ENCODE measurements at regions of chr11 and their contacts with region 1.

Region 1: DNA sequence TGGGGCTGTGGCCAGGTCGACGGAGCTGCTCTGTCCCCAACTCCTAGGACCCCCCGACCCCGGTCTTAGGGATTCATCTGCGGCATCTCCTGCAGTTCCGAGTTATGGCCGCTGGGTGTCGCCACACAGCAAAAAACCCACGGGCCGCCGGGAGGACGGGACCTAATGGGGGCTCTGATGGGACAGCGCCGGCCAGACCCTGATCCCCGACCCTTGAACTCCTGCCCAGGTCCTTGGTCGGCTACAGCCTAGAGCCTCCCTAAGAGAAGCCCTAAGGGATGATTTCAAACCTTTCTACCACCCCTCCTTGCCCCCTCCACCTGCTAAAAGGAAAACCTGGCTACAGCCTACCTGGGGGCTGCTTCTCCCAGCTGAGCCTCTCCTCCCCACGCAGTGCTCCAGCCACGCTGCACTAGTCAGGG is 30.8 kb upstream of the LRRC10B start:
- DNase-seq: peak; percentile 52 to 72
- H3K4me3 ChIP-seq: no peak overlapping the region
- H3K4me3 Mint-ChIP-seq: no peak overlapping the region
- H3K27ac Mint-ChIP-seq: no peak overlapping the region
- H3K4me1 ChIP-seq: peaks cover 12% of the 10 kb centered on the region
- H3K4me1 Mint-ChIP-seq: no peaks in the 10 kb centered on the region
- H3K27me3 ChIP-seq: no peaks in the 10 kb centered on the region
- H3K27me3 Mint-ChIP-seq: no peaks in the 10 kb centered on the region
- CTCF ChIP-seq: peak; percentile 94 to 97

Region 2: GRCh38 chr11:61446211-61446651 is 31.5 kb before region 1 on chr11:
- CTCF ChIA-PET with region 1: interaction called, 9 read pairs
- POLR2A ChIA-PET with region 1: no interaction called
- intact Hi-C with region 1: loop called (anchors 2 kb)
- DNase-seq: peak; percentile 83 to 88
- H3K4me3 ChIP-seq: no peak overlapping the region
- H3K4me3 Mint-ChIP-seq: no peak overlapping the region
- H3K27ac Mint-ChIP-seq: no peak overlapping the region
- H3K4me1 ChIP-seq: no peaks in the 10 kb centered on the region
- H3K4me1 Mint-ChIP-seq: peaks cover 6% of the 10 kb centered on the region
- H3K27me3 ChIP-seq: no peaks in the 10 kb centered on the region
- H3K27me3 Mint-ChIP-seq: no peaks in the 10 kb centered on the region
- CTCF ChIP-seq: peak; percentile 79 to 91

Region 3: DNA sequence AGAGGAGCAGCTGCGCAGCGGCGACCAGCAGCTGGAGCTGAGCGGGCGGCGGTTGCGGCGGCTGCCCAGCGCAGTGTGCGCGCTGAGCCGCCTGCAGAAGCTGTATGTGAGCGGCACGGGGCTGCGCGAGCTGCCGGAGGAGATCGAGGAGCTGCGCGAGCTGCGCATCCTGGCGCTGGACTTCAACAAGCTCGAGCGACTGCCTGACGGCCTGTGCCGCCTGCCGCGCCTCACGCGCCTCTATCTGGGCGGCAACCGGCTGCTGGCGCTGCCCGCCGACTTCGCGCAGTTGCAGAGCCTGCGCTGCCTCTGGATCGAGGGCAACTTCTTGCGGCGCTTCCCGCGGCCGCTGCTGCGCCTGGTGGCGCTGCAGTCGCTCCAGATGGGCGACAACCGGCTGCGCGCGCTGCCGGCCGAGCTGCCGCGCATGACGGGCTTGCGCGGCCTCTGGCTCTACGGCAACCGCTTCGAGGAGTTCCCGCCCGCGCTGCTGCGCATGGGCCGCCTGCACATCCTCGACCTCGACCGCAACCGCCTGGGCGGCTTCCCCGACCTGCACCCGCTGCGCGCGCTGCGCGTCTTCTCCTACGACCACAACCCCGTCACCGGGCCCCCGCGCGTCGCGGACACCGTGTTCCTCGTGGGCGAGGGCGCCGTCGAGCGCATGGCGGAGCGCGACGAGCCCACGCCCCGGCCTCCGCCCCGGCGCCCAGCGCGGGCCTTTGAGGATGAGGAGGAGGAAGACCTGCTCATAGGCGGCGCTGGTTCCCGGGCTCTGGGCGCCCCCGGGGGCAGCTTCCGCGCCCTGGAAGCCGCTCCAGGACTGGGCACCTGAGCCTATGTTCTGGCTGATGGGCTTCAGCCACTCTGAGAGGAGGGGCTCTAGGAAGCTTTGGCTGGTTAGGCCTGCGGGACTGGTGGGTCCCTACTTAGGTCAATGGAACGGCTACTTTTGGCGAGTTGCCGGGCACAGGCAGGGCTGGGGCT is 31.6 kb after region 1 on chr11:
- CTCF ChIA-PET with region 1: interaction called, 9 read pairs
- POLR2A ChIA-PET with region 1: interaction called, 3 read pairs
- intact Hi-C with region 1: loop called (anchors 2 kb)
- DNase-seq: peak; percentile 82 to 87
- H3K4me3 ChIP-seq: peak overlapping the region; percentile 52
- H3K4me3 Mint-ChIP-seq: peak overlapping the region; percentile 80
- H3K27ac Mint-ChIP-seq: no peak overlapping the region
- H3K4me1 ChIP-seq: peaks cover 37% of the 10 kb centered on the region
- H3K4me1 Mint-ChIP-seq: peaks cover 27% of the 10 kb centered on the region
- H3K27me3 ChIP-seq: no peaks in the 10 kb centered on the region
- H3K27me3 Mint-ChIP-seq: peaks cover 5% of the 10 kb centered on the region
- CTCF ChIP-seq: peak; percentile 59 to 71

Region 4: GRCh38 chr11:61516675-61517572 is 39.2 kb after region 1 on chr11:
- CTCF ChIA-PET with region 1: interaction called, 33 read pairs
- POLR2A ChIA-PET with region 1: interaction called, 3 read pairs
- intact Hi-C with region 1: loop called (anchors 1 kb)
- DNase-seq: peak in 1 of 2 experiments; percentile 73
- H3K4me3 ChIP-seq: no peak overlapping the region
- H3K4me3 Mint-ChIP-seq: no peak overlapping the region
- H3K27ac Mint-ChIP-seq: no peak overlapping the region
- H3K4me1 ChIP-seq: peaks cover 23% of the 10 kb centered on the region
- H3K4me1 Mint-ChIP-seq: peaks cover 23% of the 10 kb centered on the region
- H3K27me3 ChIP-seq: no peaks in the 10 kb centered on the region
- H3K27me3 Mint-ChIP-seq: no peaks in the 10 kb centered on the region
- CTCF ChIP-seq: peak; percentile 97 to 99

Region 5: DNA sequence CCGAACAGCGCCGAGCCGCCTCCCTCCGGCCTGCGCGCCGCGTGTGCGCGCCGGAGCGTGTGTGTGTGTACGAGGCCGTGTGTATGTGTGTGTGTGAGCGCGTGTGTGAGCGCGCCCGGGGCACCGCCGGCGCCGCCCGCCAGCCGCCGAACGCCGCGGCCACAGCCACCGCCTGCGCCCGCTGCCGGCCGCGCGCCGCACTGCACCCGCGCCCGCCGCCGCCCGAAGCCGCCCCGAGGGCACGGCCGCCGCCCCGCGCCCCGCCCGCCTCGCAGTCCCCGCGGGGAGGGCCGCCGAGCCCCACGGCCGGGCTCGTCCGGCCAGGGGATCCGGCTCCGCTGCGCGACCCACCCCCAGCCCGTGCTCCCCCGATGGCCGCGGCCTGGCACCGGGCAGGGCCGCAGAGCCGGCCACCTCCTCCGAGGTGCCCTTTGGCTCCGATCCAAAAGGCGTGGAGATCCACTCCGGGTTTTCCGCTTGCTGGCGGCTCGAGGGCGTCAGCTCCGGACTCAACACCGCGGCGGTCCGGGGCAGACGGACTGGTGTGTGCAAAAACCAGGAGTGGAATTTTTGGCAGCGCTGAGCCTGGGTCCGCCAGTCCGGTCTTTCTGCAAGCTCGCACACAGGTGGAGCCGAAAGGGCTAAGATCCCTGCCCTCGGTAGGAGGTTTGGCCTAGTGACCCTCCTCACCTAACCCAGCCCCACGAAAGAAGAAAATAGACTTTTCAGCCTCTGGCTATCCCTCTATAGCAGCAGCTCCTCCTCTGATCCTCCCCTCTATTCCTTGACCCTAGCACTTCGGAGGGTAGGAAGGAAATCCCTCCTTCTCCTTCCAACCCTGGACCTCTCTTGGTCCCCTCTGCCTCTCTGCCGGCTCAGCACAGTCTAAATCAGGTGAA is 103.5 kb after region 1 on chr11 and contains the start of gene SYT7:
- CTCF ChIA-PET with region 1: interaction called, 3 read pairs
- POLR2A ChIA-PET with region 1: no interaction called
- intact Hi-C with region 1: loop called (anchors 2 kb)
- DNase-seq: peak; percentile 97 to 100
- H3K4me3 ChIP-seq: peak within 1 kb of the TSS; percentile 80
- H3K4me3 Mint-ChIP-seq: peak within 1 kb of the TSS; percentile 74
- H3K27ac Mint-ChIP-seq: peak within 1 kb of the TSS; percentile 62
- H3K4me1 ChIP-seq: peaks cover 11% of the 10 kb centered on the region
- H3K4me1 Mint-ChIP-seq: peaks cover 21% of the 10 kb centered on the region
- H3K27me3 ChIP-seq: no peaks in the 10 kb centered on the region
- H3K27me3 Mint-ChIP-seq: no peaks in the 10 kb centered on the region
- CTCF ChIP-seq: no peak
- total RNA-seq, gene SYT7: 32.8 and 33.5 TPM in 2 replicates

Region 6: DNA sequence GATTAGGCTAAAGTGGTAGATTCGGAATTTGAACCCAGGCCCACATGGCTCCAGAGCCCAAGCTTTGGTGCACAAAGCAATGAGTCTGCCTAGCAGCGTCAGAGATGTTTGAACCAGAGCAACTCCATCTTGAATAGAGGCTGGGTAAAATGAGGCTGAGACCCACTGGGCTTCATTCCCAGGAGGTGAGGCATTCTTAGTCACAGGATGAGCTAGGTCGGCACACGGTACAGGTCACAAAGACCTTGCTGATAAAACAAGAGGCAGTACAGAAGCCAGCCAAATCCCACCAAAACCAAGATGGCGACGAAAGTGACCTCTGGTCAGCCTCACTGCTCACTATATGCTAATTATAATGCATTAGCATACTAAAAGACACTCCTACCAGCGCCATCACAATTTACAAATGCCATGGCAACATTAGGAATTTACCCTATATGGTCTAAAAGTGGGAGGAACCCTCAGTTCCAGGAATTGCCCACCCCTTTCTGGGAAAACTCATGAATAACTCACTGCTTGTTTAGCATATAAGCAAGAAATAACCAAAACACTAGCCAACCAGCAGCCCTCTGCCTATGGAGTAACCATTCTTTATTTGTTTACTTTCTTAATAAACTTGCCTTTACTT is 162.2 kb after region 1 on chr11:
- CTCF ChIA-PET with region 1: interaction called, 20 read pairs
- POLR2A ChIA-PET with region 1: no interaction called
- intact Hi-C with region 1: loop called (anchors 1 kb)
- DNase-seq: no peak
- H3K4me3 ChIP-seq: no peak overlapping the region
- H3K4me3 Mint-ChIP-seq: no peak overlapping the region
- H3K27ac Mint-ChIP-seq: no peak overlapping the region
- H3K4me1 ChIP-seq: 0 out of 2 replicates have a peak, but pooled peaks cover 4% of the 10 kb centered on the region
- H3K4me1 Mint-ChIP-seq: no peaks in the 10 kb centered on the region
- H3K27me3 ChIP-seq: no peaks in the 10 kb centered on the region
- H3K27me3 Mint-ChIP-seq: no peaks in the 10 kb centered on the region
- CTCF ChIP-seq: no peak

Measured in Caco-2 (cell line).